Activated naive CD4-positive, alpha-beta T cell treated with anti-CD3 and anti-CD28 coated beads for 36 hours (primary cell): ENCODE measurements at regions of chr4 and their contacts with region 1.

Region 1: GRCh38 chr4:173257732-173258717 is 76.1 kb downstream of the HMGB2 start:
- DNase-seq: peak; percentile 77
- H3K4me3 Mint-ChIP-seq: no peak overlapping the region
- H3K27ac Mint-ChIP-seq: no peak overlapping the region
- H3K4me1 Mint-ChIP-seq: peaks cover 8% of the 10 kb centered on the region
- H3K27me3 Mint-ChIP-seq: no peaks in the 10 kb centered on the region

Region 2: DNA sequence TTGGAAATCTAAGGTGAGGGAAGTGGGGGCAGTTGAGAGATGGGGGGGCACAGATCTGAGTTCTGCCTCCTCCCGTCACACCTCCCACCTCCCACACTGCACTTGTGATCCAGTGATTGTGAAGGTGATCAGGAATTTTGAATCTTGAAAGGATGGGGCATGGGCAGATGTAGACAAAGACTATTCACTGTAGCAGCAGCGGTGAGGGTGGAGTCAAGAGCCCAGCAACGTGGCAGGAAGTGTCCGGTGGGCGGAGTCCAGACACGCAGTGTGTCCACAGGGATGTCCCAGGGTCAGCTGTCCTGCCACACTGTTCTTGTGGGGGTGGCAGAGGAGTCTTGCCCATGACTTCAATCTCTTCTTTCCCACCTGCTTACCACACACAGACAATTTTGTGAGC is 419.9 kb before region 1 on chr4:
- CTCF ChIA-PET with region 1: no interaction called
- intact Hi-C with region 1: loop called (anchors 5 kb)
- DNase-seq: no peak
- H3K4me3 Mint-ChIP-seq: no peak overlapping the region
- H3K27ac Mint-ChIP-seq: no peak overlapping the region
- H3K4me1 Mint-ChIP-seq: no peaks in the 10 kb centered on the region
- H3K27me3 Mint-ChIP-seq: no peaks in the 10 kb centered on the region

Region 3: DNA sequence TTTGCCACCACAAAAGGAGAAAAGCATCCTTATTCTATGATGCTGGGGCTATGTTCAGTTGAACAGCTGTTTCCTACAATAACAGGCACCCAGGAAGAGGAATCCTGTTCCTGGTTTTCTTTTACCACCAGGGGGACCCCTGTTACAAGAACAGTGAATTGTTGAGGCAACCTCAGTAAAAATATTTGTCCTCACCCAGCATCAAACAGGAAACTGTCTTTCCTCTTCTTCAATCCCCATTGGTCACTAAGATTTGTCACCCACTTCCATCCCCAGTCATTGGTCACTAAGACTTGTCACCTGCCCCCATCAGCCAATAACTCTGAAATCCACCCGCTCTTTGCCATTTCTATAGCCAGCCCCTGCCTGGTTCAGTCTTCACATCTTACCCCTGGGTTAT is 232.9 kb before region 1 on chr4:
- CTCF ChIA-PET with region 1: interaction called, 31 read pairs
- intact Hi-C with region 1: loop called (anchors 1 kb)
- DNase-seq: peak; percentile 43
- H3K4me3 Mint-ChIP-seq: no peak overlapping the region
- H3K27ac Mint-ChIP-seq: no peak overlapping the region
- H3K4me1 Mint-ChIP-seq: peaks cover 4% of the 10 kb centered on the region
- H3K27me3 Mint-ChIP-seq: no peaks in the 10 kb centered on the region

Region 4: GRCh38 chr4:173192375-173193162 is 65.5 kb before region 1 on chr4:
- CTCF ChIA-PET with region 1: no interaction called
- intact Hi-C with region 1: loop called (anchors 1 kb)
- DNase-seq: peak; percentile 21
- H3K4me3 Mint-ChIP-seq: no peak overlapping the region
- H3K27ac Mint-ChIP-seq: no peak overlapping the region
- H3K4me1 Mint-ChIP-seq: peaks cover 42% of the 10 kb centered on the region
- H3K27me3 Mint-ChIP-seq: no peaks in the 10 kb centered on the region

Region 5: GRCh38 chr4:173301518-173302201 is 43.6 kb after region 1 on chr4:
- CTCF ChIA-PET with region 1: interaction called, 12 read pairs
- intact Hi-C with region 1: loop called (anchors 2 kb)
- DNase-seq: peak; percentile 39
- H3K4me3 Mint-ChIP-seq: no peak overlapping the region
- H3K27ac Mint-ChIP-seq: no peak overlapping the region
- H3K4me1 Mint-ChIP-seq: peaks cover 2% of the 10 kb centered on the region
- H3K27me3 Mint-ChIP-seq: no peaks in the 10 kb centered on the region

Region 6: DNA sequence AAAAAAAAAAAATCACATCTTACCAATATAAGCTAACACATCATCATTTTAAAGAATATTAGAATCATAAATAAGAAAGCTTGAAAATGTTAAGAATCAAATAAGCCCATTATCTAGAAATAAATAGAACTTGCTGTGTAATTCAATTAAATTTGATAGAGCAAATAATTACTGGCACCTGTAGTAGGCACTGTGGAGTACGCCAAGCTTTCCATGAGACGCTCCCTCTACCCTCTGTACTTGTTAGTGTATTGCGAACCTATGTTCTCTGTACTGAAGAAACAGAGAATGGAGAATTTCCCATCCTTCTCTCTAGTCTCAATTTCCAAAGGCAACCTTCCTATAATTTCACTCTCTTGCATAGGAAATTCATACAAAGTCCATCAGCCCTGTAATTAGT is 333.7 kb after region 1 on chr4:
- CTCF ChIA-PET with region 1: no interaction called
- intact Hi-C with region 1: no loop called
- DNase-seq: no peak
- H3K4me3 Mint-ChIP-seq: no peak overlapping the region
- H3K27ac Mint-ChIP-seq: no peak overlapping the region
- H3K4me1 Mint-ChIP-seq: no peaks in the 10 kb centered on the region
- H3K27me3 Mint-ChIP-seq: peaks cover 2% of the 10 kb centered on the region